ENCODE measurements at regions of chr10 and their contacts with region 1.

Region 1: DNA sequence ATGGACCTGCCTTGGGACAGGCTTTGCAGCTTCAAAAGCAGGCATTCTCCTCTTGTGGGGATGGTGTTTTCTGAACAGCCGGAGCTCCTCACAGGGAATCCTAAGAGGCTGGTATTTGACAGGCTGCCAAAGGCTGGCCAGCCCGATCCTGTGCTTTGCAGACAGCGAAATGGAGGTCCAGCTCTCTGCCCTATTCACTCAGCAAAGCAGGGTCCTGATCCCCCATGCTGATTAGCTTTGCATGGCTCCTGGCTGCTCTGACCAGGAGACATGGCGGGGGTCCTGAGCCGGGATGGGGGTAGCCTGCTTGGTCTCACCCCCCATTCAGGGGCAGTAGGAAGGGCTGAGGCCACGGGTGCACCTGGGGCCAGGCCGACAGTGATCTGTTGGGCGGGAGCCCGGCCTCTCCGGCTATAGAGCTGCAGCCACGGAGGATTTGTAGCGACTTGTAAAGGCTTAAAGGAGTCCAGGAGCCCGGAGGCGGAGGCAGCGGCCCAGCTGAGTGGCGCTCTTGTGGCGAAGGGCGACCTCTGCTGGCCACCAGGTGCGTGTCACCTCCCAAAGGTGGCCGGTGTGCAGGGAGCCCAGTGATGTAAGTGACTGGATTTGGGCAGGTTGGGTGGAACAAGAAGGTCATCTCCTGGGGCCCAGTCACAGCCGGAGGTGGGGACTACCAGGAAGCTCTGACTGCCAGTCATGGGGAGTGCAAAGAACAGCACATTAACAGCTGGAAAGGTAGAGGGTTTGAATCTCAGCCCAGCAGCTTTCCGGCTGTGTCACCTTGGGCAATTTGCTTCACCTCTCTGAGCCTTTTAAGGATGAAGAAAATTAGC is 126.5 kb downstream of the ZMIZ1 start:
- DNase-seq: peak; percentile 87
- H3K4me3 ChIP-seq: no peak overlapping the region
- H3K27ac ChIP-seq: peak overlapping the region; percentile 55 to 80 (median 73)
- H3K4me1 ChIP-seq: peaks cover 6 to 18% (median 11%) of the 10 kb centered on the region in 4 donors
- H3K27me3 ChIP-seq: no peaks in the 10 kb centered on the region
- CTCF ChIP-seq: peak; percentile 93 to 97 (median 96)
- EP300 ChIP-seq: no peak
- POLR2A ChIP-seq: no peak

Region 2: GRCh38 chr10:78029269-78030226 is 1165.8 kb before region 1 on chr10 and contains the start of gene POLR3A:
- in situ Hi-C with region 1: loop called in 2 of 4 experiments (anchors 25 kb)
- intact Hi-C with region 1: no loop called
- DNase-seq: peak; percentile 96
- H3K4me3 ChIP-seq: peak within 1 kb of the TSS; percentile 58 to 89 (median 84)
- H3K27ac ChIP-seq: peak within 1 kb of the TSS; percentile 75 to 90 (median 89)
- H3K4me1 ChIP-seq: peaks cover 11 to 24% (median 17%) of the 10 kb centered on the region in 4 donors
- H3K27me3 ChIP-seq: no peaks in the 10 kb centered on the region
- CTCF ChIP-seq: peak; percentile 63 to 97 (median 82)
- EP300 ChIP-seq: no peak
- POLR2A ChIP-seq: no peak
- total RNA-seq, gene POLR3A: 8.0 to 16.8 (median 13.1) TPM

Region 3: DNA sequence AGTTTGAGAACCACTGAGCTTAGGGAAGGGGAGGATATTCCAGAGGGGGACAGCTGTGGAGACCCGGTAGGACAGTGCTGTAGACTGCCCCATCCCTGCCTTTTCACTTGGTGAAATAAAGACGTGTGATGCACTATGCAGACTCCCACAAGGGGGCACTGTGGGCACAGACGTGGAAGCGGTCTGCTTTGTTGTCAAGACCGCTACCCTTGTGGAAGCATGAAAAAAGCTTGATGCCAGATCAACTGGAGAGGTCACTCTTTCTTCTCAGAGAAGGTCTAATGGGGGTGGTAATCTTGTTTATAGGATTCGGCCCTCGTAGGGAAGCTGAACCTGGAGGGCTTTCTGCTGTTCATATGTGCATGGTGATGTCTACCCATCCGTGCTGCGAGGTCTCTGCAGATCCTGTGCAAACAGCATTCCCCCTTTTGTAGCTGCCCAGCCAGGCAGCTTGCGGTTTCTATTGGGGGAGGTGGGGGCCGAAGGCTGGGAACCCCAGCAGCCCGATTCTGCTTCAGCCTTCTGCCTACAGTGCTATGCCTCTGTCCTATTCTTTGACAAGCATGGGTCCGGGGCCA is 1147.9 kb before region 1 on chr10:
- in situ Hi-C with region 1: loop called (anchors 5 to 25 kb)
- intact Hi-C with region 1: no loop called
- DNase-seq: peak; percentile 89
- H3K4me3 ChIP-seq: no peak overlapping the region
- H3K27ac ChIP-seq: no peak overlapping the region
- H3K4me1 ChIP-seq: peaks cover 0 to 11% (median 2%) of the 10 kb centered on the region in 4 donors
- H3K27me3 ChIP-seq: no peaks in the 10 kb centered on the region
- CTCF ChIP-seq: peak; percentile 86 to 89 (median 88)
- EP300 ChIP-seq: no peak
- POLR2A ChIP-seq: no peak

Region 4: GRCh38 chr10:78552261-78552811 is 643.0 kb before region 1 on chr10:
- in situ Hi-C with region 1: no loop called
- intact Hi-C with region 1: no loop called
- DNase-seq: peak; percentile 48
- H3K4me3 ChIP-seq: no peak overlapping the region
- H3K27ac ChIP-seq: peak overlapping the region; percentile 50 to 84 (median 62)
- H3K4me1 ChIP-seq: peaks cover 14 to 33% (median 18%) of the 10 kb centered on the region in 4 donors
- H3K27me3 ChIP-seq: no peaks in the 10 kb centered on the region
- CTCF ChIP-seq: no peak
- EP300 ChIP-seq: no peak
- POLR2A ChIP-seq: no peak

Region 5: DNA sequence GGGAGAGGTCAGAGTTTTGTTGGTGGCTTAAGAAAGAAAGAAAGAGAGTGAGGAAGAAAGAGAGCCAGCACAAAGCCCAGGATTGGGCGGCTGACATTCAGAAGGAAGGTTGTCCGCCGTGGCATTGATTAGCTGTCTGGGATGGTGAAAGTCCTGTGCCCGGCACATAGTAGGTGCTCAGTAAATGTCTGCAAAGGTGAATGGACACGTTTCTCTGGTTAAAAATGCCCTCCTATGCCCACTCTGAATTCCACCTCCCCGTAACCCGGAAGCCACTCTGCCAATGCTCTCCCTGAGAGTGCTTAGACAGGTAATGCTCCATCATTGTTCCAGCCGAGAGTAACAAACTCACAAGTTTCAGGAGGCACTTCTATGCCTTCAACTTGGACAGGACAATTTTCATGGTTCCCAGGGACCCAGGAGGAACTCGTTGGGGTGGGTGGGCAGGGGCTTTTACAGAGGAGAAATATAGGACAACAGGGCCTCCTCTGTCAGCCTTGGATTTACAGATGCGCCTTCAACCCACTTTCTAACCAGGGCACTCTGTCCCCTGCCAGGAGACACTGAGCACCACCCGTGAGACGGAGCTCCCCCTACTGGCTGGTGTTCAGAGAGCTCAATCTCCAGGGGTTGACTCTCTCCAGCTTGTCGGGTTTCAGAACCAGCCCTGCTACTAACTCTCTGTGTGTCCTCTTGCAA is 538.0 kb before region 1 on chr10:
- in situ Hi-C with region 1: loop called in 1 of 4 experiments (anchors 25 kb)
- intact Hi-C with region 1: no loop called
- DNase-seq: peak; percentile 86
- H3K4me3 ChIP-seq: no peak overlapping the region
- H3K27ac ChIP-seq: peak overlapping the region; percentile 28 to 44 (median 40)
- H3K4me1 ChIP-seq: peaks cover 0 to 8% (median 2%) of the 10 kb centered on the region in 4 donors
- H3K27me3 ChIP-seq: no peaks in the 10 kb centered on the region
- CTCF ChIP-seq: peak; percentile 58 to 78 (median 73)
- EP300 ChIP-seq: no peak
- POLR2A ChIP-seq: no peak

Region 6: DNA sequence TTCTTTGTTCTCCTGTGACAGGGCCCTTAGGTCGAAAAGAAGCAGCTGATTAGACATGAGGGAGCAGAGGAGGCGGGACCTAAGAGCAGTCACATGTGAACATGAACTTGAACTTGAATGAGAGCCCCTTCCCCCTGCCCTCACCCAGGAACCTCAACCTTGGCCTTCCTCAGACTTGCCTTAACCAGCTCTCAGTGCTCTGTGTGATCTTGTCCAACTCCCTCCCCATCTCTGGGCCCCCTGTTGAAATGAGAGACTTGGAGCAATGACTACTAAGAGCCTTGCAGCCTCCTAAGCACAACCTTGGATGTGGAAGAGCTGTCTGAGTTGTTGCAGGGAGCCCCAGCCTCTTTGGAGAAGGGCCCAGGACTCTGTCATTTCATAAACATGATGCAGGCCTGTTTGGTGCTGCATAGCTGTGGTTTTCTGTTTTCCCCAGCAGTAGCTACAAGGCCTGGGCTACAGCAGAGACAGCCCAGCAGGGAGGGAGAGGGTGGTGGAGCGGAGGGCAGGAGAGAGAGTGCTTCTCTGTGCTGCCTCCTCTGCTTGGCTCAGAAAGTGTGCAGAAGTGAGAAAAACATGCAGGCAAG is 250.5 kb before region 1 on chr10:
- in situ Hi-C with region 1: loop called in 2 of 4 experiments (anchors 25 kb)
- intact Hi-C with region 1: no loop called
- DNase-seq: peak; percentile 56
- H3K4me3 ChIP-seq: no peak overlapping the region
- H3K27ac ChIP-seq: peak overlapping the region; percentile 64 to 80 (median 70)
- H3K4me1 ChIP-seq: peaks cover 7 to 21% (median 19%) of the 10 kb centered on the region in 4 donors
- H3K27me3 ChIP-seq: no peaks in the 10 kb centered on the region
- CTCF ChIP-seq: no peak
- EP300 ChIP-seq: no peak
- POLR2A ChIP-seq: peak; percentile 7

Region 7: GRCh38 chr10:79209340-79209739 is 14.0 kb after region 1 on chr10:
- in situ Hi-C with region 1: no loop called
- intact Hi-C with region 1: no loop called
- DNase-seq: no peak
- H3K4me3 ChIP-seq: no peak overlapping the region
- H3K27ac ChIP-seq: no peak overlapping the region
- H3K4me1 ChIP-seq: no peaks in the 10 kb centered on the region
- H3K27me3 ChIP-seq: no peaks in the 10 kb centered on the region
- CTCF ChIP-seq: no peak
- EP300 ChIP-seq: no peak
- POLR2A ChIP-seq: no peak

Measured in transverse colon (tissue), 4 donors.